Common myeloid progenitor, CD34-positive (primary cell): ENCODE measurements at regions of chr20 and their contacts with region 1.

Region 1: GRCh38 chr20:37202267-37202943 is 23.1 kb upstream of the MROH8 start:
- DNase-seq: peak; percentile 34 to 62 (median 51)
- H3K4me3 ChIP-seq: no peak overlapping the region
- H3K27ac ChIP-seq: no peak overlapping the region
- H3K4me1 ChIP-seq: no peaks in the 10 kb centered on the region
- H3K27me3 ChIP-seq: no peaks in the 10 kb centered on the region

Region 2: DNA sequence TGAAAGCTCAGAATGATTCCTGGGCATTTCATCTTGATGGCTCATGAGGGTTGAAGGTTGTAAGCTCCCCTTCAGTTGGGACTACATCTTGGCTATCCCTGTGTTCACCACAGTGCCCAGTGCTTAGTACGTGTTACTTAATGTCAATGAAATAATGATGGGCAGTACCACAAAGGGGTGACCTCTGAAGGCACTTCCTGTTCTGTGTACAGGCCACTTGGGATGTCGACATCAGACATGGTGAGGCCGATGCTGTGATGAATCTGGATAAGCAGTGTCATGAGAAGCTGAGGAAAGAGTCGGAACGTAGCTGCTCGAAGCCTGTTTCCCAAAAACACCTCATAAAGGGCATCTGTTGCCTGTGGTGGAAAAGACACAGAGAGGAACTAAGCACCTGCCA is 79.0 kb before region 1 on chr20:
- CTCF ChIA-PET with region 1: no interaction called
- POLR2A ChIA-PET with region 1: no interaction called
- DNase-seq: no peak
- H3K4me3 ChIP-seq: no peak overlapping the region
- H3K27ac ChIP-seq: no peak overlapping the region
- H3K4me1 ChIP-seq: no peaks in the 10 kb centered on the region
- H3K27me3 ChIP-seq: no peaks in the 10 kb centered on the region

Region 3: GRCh38 chr20:37534401-37535157 is 332.2 kb after region 1 on chr20:
- CTCF ChIA-PET with region 1: interaction called, 35 read pairs
- POLR2A ChIA-PET with region 1: no interaction called
- DNase-seq: peak; percentile 80 to 90 (median 88)
- H3K4me3 ChIP-seq: no peak overlapping the region
- H3K27ac ChIP-seq: no peak overlapping the region
- H3K4me1 ChIP-seq: peaks cover 0 to 12% (median under 1%) of the 10 kb centered on the region in 4 experiments
- H3K27me3 ChIP-seq: no peaks in the 10 kb centered on the region